Natural killer cell (primary cell): ENCODE measurements at regions of chr11 and their contacts with region 1.

Region 1: GRCh38 chr11:118928108-118928870 is 2.6 kb upstream of the BCL9L start:
- DNase-seq: peak; percentile 94 to 99
- ATAC-seq: peak; percentile 57 to 80 (median 65)
- H3K4me3 ChIP-seq: peak overlapping the region; percentile 89
- H3K4me3 Mint-ChIP-seq: peak overlapping the region; percentile 96
- H3K27ac ChIP-seq: peak overlapping the region; percentile 98
- H3K27ac Mint-ChIP-seq: peak overlapping the region; percentile 95 to 96
- H3K4me1 ChIP-seq: peaks cover 56% of the 10 kb centered on the region
- H3K4me1 Mint-ChIP-seq: peaks cover 47 to 62% of the 10 kb centered on the region in 2 donors
- H3K27me3 ChIP-seq: no peaks in the 10 kb centered on the region
- H3K27me3 Mint-ChIP-seq: peaks cover 0 to 3% of the 10 kb centered on the region in 2 donors
- CTCF ChIP-seq: peak; percentile 89

Region 2: GRCh38 chr11:118791111-118791965 is 137.0 kb before region 1 on chr11 and contains the start of gene DDX6:
- intact Hi-C with region 1: loop called (anchors 2 kb)
- DNase-seq: peak; percentile 87 to 93
- ATAC-seq: peak; percentile 63 to 83 (median 74)
- H3K4me3 ChIP-seq: peak within 1 kb of the TSS; percentile 79
- H3K4me3 Mint-ChIP-seq: peak within 1 kb of the TSS; percentile 98
- H3K27ac ChIP-seq: peak within 1 kb of the TSS; percentile 97
- H3K27ac Mint-ChIP-seq: peak within 1 kb of the TSS; percentile 99
- H3K4me1 ChIP-seq: peaks cover 40% of the 10 kb centered on the region
- H3K4me1 Mint-ChIP-seq: peaks cover 30 to 47% of the 10 kb centered on the region in 2 donors
- H3K27me3 ChIP-seq: no peaks in the 10 kb centered on the region
- H3K27me3 Mint-ChIP-seq: no peaks in the 10 kb centered on the region
- CTCF ChIP-seq: no peak
- total RNA-seq, gene DDX6: 350 to 369 (median 364) TPM

Region 3: DNA sequence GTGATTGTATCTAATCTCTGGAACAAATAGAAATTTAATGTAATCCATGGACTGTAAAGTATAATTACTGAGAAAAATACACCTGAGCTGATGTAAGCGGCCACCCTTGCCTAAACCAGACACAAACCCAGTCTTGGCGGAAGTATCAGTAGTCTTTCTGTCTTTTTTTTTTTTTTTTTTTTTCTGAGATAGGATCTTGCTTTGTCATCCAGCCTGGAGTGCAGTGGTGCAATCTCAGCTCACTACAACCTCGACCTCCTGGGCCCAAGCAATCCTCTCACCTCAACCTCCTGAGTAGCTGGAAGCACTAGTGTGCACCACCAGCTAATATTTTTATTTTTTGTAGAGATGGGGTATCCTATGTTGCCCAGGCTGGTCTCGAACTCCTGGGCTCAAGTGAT is 50.1 kb before region 1 on chr11:
- intact Hi-C with region 1: loop called (anchors 5 kb)
- DNase-seq: peak in 1 of 2 donors; percentile 72
- ATAC-seq: no peak
- H3K4me3 ChIP-seq: no peak overlapping the region
- H3K4me3 Mint-ChIP-seq: no peak overlapping the region
- H3K27ac ChIP-seq: peak overlapping the region; percentile 81
- H3K27ac Mint-ChIP-seq: peak overlapping the region in 1 of 2 donors; percentile 99
- H3K4me1 ChIP-seq: peaks cover 60% of the 10 kb centered on the region
- H3K4me1 Mint-ChIP-seq: peaks cover 37 to 64% of the 10 kb centered on the region in 2 donors
- H3K27me3 ChIP-seq: no peaks in the 10 kb centered on the region
- H3K27me3 Mint-ChIP-seq: no peaks in the 10 kb centered on the region
- CTCF ChIP-seq: no peak

Region 4: GRCh38 chr11:118907051-118908042 is 20.9 kb before region 1 on chr11:
- intact Hi-C with region 1: loop called (anchors 1 kb)
- DNase-seq: peak; percentile 84 to 92
- ATAC-seq: peak; percentile 48 to 80 (median 61)
- H3K4me3 ChIP-seq: no peak overlapping the region
- H3K4me3 Mint-ChIP-seq: peak overlapping the region; percentile 6
- H3K27ac ChIP-seq: peak overlapping the region; percentile 56
- H3K27ac Mint-ChIP-seq: peak overlapping the region; percentile 86 to 90
- H3K4me1 ChIP-seq: peaks cover 48% of the 10 kb centered on the region
- H3K4me1 Mint-ChIP-seq: peaks cover 38 to 51% of the 10 kb centered on the region in 2 donors
- H3K27me3 ChIP-seq: no peaks in the 10 kb centered on the region
- H3K27me3 Mint-ChIP-seq: no peaks in the 10 kb centered on the region
- CTCF ChIP-seq: peak; percentile 79

Region 5: GRCh38 chr11:118914178-118914918 is 13.9 kb before region 1 on chr11:
- intact Hi-C with region 1: loop called (anchors 1 kb)
- DNase-seq: peak; percentile 65 to 86
- ATAC-seq: peak; percentile 25 to 69 (median 44)
- H3K4me3 ChIP-seq: peak overlapping the region; percentile 30
- H3K4me3 Mint-ChIP-seq: peak overlapping the region; percentile 89
- H3K27ac ChIP-seq: peak overlapping the region; percentile 94
- H3K27ac Mint-ChIP-seq: peak overlapping the region; percentile 95 to 96
- H3K4me1 ChIP-seq: peaks cover 98% of the 10 kb centered on the region
- H3K4me1 Mint-ChIP-seq: peaks cover 66 to 91% of the 10 kb centered on the region in 2 donors
- H3K27me3 ChIP-seq: no peaks in the 10 kb centered on the region
- H3K27me3 Mint-ChIP-seq: no peaks in the 10 kb centered on the region
- CTCF ChIP-seq: no peak

Region 6: GRCh38 chr11:119095066-119095880 is 167.0 kb after region 1 on chr11:
- intact Hi-C with region 1: loop called (anchors 2 kb)
- DNase-seq: peak; percentile 99
- ATAC-seq: peak; percentile 80 to 92 (median 86)
- H3K4me3 ChIP-seq: peak overlapping the region; percentile 70
- H3K4me3 Mint-ChIP-seq: peak overlapping the region; percentile 91
- H3K27ac ChIP-seq: peak overlapping the region; percentile 84
- H3K27ac Mint-ChIP-seq: peak overlapping the region; percentile 95 to 96
- H3K4me1 ChIP-seq: peaks cover 32% of the 10 kb centered on the region
- H3K4me1 Mint-ChIP-seq: peaks cover 34 to 43% of the 10 kb centered on the region in 2 donors
- H3K27me3 ChIP-seq: no peaks in the 10 kb centered on the region
- H3K27me3 Mint-ChIP-seq: no peaks in the 10 kb centered on the region
- CTCF ChIP-seq: peak; percentile 3